ENCODE measurements at regions of chr2 and their contacts with region 1.

Region 1: DNA sequence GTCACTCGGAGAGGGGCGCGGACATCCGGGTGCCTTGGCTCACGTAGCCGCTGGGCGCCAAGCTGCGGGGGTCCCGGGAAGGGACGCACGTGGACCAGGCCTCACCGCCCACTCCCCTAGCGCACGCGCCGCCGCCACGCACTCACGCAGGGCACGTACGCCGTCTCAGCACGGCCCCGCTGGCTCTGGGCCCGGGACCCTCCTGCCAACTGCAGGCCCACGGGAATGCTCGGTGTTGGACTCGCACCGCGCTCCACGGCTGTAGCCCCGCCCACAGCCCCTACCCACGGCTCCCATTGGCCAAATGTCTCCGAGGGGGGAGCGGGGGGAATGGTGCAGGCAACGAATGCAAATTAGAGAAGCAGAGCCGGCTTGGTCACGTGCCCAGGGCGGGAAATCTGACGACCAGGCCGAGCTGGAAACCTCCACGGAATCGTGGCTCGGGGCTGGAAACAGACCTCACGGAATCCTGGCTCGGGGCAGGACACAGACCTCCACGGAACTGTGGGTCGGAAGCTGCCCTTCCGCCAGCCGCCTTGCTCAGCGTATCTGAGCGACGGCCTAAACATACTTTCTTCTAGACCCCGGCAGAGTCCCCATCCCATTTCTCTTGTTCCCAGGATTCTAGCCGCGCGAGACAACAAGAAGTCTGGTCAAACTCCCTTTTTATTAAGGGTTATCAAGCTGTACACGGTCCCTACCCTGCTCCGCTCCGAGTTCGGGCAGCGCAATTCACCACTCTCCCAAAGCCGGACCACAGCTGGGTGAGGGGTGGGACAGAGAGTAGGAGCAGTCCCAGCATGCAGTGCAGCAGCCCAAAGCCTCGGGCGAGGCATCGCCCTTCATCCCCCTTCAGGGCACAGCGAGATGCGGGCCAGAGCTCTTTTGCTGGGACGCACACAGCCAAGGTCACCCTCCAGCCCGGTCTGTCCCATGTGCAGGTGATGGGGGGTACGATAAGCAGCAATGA is at the start of gene ABCB6:
- DNase-seq: peak; percentile 79
- H3K4me3 Mint-ChIP-seq: peak within 1 kb of the TSS; percentile 74
- H3K27ac Mint-ChIP-seq: peak within 1 kb of the TSS; percentile 75
- H3K4me1 Mint-ChIP-seq: peaks cover 18% of the 10 kb centered on the region
- H3K27me3 Mint-ChIP-seq: no peaks in the 10 kb centered on the region
- CTCF ChIP-seq: no peak
- total RNA-seq, gene ABCB6: 11.7 and 12.1 TPM in 2 replicates

Region 2: DNA sequence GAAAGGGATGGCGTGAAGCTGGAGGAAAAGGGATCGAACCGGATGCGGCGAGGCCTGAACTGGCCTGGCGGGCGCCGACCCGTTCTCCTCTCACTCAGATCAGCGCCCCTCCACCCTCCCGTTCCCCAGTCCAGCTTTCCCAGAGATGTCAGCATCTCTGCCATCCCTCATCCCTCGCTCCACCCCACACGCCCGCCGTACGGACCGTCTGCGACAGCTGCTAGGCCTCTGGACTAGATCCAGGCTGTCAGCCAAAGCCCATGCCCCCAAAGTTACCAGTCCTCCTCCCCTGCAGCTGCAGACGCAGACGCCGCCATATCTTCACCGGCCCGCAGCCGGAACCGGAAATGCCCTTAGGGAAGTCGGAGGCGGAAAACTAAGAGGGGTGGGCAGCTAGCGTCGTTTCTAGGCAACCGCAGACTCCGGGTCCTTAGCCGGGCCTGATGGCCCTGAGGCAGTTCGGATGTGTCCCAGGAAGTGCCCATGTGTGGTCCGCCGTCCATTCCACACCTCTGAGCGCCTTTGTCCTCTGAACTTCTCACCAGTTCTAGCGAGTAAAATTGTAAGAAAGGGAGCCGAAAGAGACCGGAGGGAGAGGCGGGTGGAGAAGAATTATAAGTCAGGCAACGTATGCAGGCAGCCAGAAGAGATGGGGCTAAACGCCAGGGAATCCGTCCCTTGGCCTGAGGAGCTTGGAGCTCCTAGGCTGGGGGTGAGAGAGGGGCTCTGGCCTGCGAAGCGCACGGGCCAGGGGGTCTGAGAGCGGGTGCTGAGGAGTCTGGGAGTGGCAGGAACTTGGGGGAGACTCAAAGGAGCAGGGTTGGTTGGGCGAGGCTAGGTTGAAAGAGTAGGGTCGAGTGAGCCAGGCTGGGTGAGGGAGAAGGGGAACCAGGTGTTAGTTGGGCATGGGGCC is 547.1 kb before region 1 on chr2 and contains the starts of genes RNF25 and STK36:
- CTCF ChIA-PET with region 1: no interaction called
- intact Hi-C with region 1: no loop called
- DNase-seq: peak; percentile 82
- H3K4me3 Mint-ChIP-seq: peak within 1 kb of the TSS; percentile 88
- H3K27ac Mint-ChIP-seq: peak within 1 kb of the TSS; percentile 68
- H3K4me1 Mint-ChIP-seq: peaks cover 16% of the 10 kb centered on the region
- H3K27me3 Mint-ChIP-seq: no peaks in the 10 kb centered on the region
- CTCF ChIP-seq: no peak
- total RNA-seq, gene RNF25: 32.1 and 36.9 TPM in 2 replicates
- total RNA-seq, gene STK36: 42.4 and 50.6 TPM in 2 replicates

Region 3: DNA sequence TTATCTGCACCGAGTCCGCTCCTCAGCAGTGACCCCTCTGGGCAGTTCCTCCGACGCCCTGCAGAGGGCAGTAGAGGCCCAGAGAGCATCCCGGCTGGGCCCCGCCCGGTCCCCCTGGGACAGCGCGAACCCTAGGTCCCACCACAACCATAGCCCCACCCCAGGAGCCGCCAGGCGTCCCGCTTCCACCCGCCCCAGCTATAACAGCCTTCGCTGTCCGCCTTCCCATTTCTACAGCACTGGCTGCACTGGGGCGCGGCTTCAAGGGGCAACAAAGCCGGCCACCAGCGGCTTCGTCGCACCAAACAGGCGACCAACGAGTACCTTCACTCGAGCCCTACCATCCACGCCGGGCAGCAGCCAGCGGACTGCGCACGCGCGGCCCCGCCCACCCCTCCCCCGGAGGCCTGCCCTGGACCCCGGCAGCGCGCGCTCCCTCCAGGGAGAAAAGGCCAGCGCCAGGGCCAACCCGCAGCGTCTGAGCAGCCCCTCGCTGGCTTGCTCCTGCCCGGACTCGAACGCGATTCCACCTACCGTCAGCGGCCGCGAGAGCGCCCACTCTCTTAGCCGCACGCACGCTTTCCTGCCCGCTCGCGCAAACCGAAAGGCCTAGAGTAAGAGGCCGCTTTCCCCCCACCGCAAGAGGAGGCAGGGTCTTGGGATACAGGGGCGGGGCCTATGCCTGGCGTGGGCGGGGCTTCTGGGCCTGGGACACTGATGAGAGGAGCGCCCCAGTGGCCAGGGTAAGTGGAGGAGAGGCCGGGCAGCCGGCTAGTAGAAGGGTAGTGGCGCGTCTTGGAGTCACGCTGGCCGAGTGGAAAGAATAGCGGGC is 58.6 kb before region 1 on chr2 and contains the start of gene NHEJ1:
- CTCF ChIA-PET with region 1: no interaction called
- intact Hi-C with region 1: loop called (anchors 10 kb)
- DNase-seq: peak; percentile 97
- H3K4me3 Mint-ChIP-seq: peak within 1 kb of the TSS; percentile 83
- H3K27ac Mint-ChIP-seq: peak within 1 kb of the TSS; percentile 80
- H3K4me1 Mint-ChIP-seq: peaks cover 10% of the 10 kb centered on the region
- H3K27me3 Mint-ChIP-seq: no peaks in the 10 kb centered on the region
- CTCF ChIP-seq: peak; percentile 98
- total RNA-seq, gene NHEJ1: 12.1 and 12.4 TPM in 2 replicates

Region 4: GRCh38 chr2:219253753-219254590 is 35.0 kb after region 1 on chr2 and contains the start of gene TUBA4A:
- CTCF ChIA-PET with region 1: interaction called, 10 read pairs
- intact Hi-C with region 1: no loop called
- DNase-seq: peak; percentile 87
- H3K4me3 Mint-ChIP-seq: peak within 1 kb of the TSS; percentile 95
- H3K27ac Mint-ChIP-seq: peak within 1 kb of the TSS; percentile 70
- H3K4me1 Mint-ChIP-seq: peaks cover 45% of the 10 kb centered on the region
- H3K27me3 Mint-ChIP-seq: peaks cover 1% of the 10 kb centered on the region
- CTCF ChIP-seq: no peak
- total RNA-seq, gene TUBA4A: 68.8 and 97.9 TPM in 2 replicates

Region 5: DNA sequence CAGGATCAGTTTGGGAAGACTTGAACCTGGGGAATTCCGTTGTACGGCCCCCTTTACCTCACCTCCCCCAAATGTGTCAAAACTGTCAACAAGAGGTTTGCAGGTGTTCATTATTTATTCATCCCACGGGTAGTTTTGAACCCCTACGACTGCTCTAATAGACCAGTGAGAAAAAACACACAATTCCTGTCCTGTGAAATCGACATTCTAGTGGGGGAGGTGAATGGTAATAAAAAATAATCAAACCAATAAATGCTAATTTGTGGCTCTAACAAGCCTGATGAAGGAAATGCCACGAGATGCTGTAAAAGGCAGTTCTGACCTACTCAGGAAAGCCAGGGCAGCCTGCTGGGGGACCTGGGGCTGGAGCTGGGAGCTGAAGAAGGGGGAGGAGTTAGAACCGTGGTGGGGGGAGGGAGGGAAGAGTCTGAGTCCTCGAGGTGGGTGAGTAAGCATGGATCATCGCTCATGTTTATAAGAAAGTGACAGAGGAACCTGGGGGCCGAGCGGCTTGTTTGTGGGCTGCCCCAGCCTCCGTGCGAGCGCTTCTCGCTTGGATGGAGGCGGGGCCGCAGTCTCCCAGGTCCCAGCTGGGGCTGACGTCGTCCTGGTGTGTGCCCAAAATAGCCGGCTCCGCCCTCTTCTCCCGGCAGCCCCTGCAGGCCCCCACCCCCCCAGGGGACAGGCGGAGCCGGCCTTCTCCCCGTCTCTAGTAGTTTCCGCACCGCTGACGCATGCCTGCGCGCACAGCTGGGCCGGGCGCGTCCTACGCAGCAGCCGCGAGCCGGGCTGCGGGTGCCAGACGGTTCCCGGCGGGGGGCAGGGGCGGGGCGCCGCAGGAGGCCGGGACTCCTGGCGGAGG is 59.9 kb after region 1 on chr2 and contains the start of gene DNAJB2:
- CTCF ChIA-PET with region 1: no interaction called
- intact Hi-C with region 1: loop called (anchors 5 kb)
- DNase-seq: peak; percentile 99
- H3K4me3 Mint-ChIP-seq: peak within 1 kb of the TSS; percentile 87
- H3K27ac Mint-ChIP-seq: peak within 1 kb of the TSS; percentile 83
- H3K4me1 Mint-ChIP-seq: peaks cover 52% of the 10 kb centered on the region
- H3K27me3 Mint-ChIP-seq: no peaks in the 10 kb centered on the region
- CTCF ChIP-seq: no peak
- total RNA-seq, gene DNAJB2: 55.1 and 68.2 TPM in 2 replicates